Activated B cell treated with CpG ODN at 0.5 μM for 24 hours (primary cell): ENCODE measurements at regions of chr6 and their contacts with region 1.

Region 1: GRCh38 chr6:116314878-116315277 is 35.1 kb upstream of the TSPYL1 start:
- DNase-seq: no peak
- ATAC-seq: peak; percentile 82
- H3K4me3 Mint-ChIP-seq: no peak overlapping the region
- H3K27ac Mint-ChIP-seq: peak overlapping the region; percentile 72
- H3K4me1 Mint-ChIP-seq: peaks cover 24% of the 10 kb centered on the region
- H3K27me3 Mint-ChIP-seq: no peaks in the 10 kb centered on the region
- CTCF ChIP-seq: no peak

Region 2: DNA sequence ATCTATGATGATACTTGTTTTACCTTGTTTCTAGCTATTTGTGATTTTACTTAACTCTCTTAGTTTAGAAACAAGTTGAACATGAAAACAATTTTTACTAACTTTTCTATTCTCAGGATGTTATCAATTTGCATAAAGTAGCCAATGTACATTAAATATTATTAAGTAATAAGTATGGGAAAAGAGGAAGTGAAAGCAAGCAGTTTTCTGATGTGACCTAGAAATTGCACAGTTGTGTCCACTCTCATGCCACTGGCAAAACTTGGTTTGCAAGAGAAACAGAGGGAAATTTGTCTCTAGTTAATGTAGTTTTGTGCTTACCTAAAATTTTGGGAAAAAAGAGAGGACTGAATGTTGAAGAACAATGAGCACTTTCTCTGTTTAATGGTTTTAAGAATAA is 15.9 kb before region 1 on chr6:
- CTCF ChIA-PET with region 1: interaction called, 4 read pairs
- POLR2A ChIA-PET with region 1: interaction called, 3 read pairs
- intact Hi-C with region 1: loop called (anchors 2 kb)
- DNase-seq: no peak
- ATAC-seq: no peak
- H3K4me3 Mint-ChIP-seq: no peak overlapping the region
- H3K27ac Mint-ChIP-seq: no peak overlapping the region
- H3K4me1 Mint-ChIP-seq: peaks cover 17% of the 10 kb centered on the region
- H3K27me3 Mint-ChIP-seq: no peaks in the 10 kb centered on the region
- CTCF ChIP-seq: no peak